PC-9 (cell line): ENCODE measurements at regions of chr3 and their contacts with region 1.

Region 1: GRCh38 chr3:119279101-119279554 is 15.1 kb upstream of the ARHGAP31 start:
- DNase-seq: no peak
- H3K4me3 ChIP-seq: no peak overlapping the region
- H3K27ac ChIP-seq: no peak overlapping the region
- H3K4me1 ChIP-seq: no peaks in the 10 kb centered on the region
- H3K27me3 ChIP-seq: no peaks in the 10 kb centered on the region
- CTCF ChIP-seq: no peak

Region 2: GRCh38 chr3:119352849-119353502 is 73.8 kb after region 1 on chr3:
- CTCF ChIA-PET with region 1: no interaction called
- POLR2A ChIA-PET with region 1: no interaction called
- intact Hi-C with region 1: loop called (anchors 2 kb)
- DNase-seq: peak in 1 of 2 experiments; percentile 66
- H3K4me3 ChIP-seq: peak overlapping the region; percentile 24; the same call in 1 of the 2 replicates
- H3K27ac ChIP-seq: peak overlapping the region; percentile 78
- H3K4me1 ChIP-seq: peaks cover 21% of the 10 kb centered on the region
- H3K27me3 ChIP-seq: no peaks in the 10 kb centered on the region
- CTCF ChIP-seq: peak; percentile 53

Region 3: GRCh38 chr3:119380697-119381096 is 101.6 kb after region 1 on chr3:
- CTCF ChIA-PET with region 1: no interaction called
- POLR2A ChIA-PET with region 1: no interaction called
- intact Hi-C with region 1: loop called (anchors 1 kb)
- DNase-seq: no peak
- H3K4me3 ChIP-seq: no peak overlapping the region
- H3K27ac ChIP-seq: no peak overlapping the region
- H3K4me1 ChIP-seq: no peaks in the 10 kb centered on the region
- H3K27me3 ChIP-seq: no peaks in the 10 kb centered on the region
- CTCF ChIP-seq: no peak

Region 4: DNA sequence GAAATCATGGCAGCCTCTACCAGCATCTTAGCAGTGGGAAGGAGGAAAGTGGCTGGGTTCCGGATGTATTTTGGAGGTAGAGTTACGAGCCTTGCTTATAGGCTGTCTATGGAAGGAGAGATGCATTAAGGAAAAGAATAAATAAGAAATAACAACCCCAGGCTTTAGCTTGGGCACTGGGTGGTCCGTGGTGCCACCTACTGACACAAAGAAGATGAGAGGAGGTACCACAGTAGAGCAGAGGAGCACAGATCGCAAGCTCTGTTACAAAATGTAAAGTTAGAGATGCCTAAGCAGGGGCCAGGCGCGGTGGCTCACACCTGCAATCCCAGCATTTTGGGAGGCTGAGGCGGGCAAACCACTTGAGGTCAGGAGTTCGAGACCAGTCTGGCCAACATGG is 109.4 kb after region 1 on chr3:
- CTCF ChIA-PET with region 1: interaction called, 3 read pairs
- POLR2A ChIA-PET with region 1: no interaction called
- intact Hi-C with region 1: loop called (anchors 1 kb)
- DNase-seq: peak in 1 of 2 experiments; percentile 59
- H3K4me3 ChIP-seq: no peak overlapping the region
- H3K27ac ChIP-seq: no peak overlapping the region
- H3K4me1 ChIP-seq: no peaks in the 10 kb centered on the region
- H3K27me3 ChIP-seq: no peaks in the 10 kb centered on the region
- CTCF ChIP-seq: peak; percentile 69